ENCODE measurements at regions of chr2 and their contacts with region 1.

Region 1: DNA sequence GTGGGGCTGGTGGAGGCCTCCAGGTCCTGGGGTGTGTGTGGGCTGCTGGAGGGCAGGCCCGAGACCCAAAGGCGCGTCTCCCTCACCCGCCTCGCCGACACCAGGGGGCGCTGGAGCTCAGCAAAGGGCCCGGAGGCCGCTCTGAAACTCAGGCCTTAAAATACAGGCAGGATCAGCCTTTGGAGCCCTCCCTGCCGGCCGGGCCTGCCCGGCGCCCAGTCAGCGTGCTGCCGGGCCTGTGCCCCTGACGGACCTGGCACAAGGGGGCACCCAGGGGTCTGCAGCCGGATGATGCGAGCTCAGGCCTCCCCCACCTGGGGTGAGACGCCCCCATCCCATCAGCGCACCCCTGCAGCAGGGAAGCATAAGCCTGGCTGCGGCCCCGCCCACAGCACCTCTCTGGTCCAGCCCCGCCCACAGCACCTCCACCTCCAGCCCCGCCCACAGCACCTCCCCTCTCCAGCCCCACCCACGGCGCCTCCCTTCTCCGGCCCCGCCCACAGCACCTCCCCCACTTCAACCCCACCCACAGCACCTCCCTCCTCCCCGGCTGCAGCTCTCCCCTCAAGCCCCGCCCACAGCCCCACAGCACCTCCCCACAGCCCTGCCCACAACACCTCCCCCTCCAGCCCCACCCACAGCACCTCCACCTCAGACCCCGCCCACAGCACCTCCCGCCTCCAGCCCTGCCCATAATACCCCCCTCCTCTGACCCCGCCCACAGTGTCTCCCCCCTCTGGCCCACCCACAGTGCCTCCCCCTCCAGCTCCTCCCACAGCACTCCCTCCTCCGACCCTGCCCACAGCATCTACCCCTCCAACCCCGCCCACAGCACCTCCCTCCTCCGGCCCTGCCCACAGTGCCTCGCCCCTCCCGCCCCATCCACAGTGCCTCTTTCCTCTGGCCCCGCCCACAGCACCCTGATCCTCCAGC is 92.8 kb upstream of the OTOS start:
- DNase-seq: peak; percentile 86 to 88
- ATAC-seq: peak; percentile 72 to 85 (median 77)
- H3K4me3 ChIP-seq: peak overlapping the region in 6 of 10 donors; percentile 24 to 41 (median 34)
- H3K27ac ChIP-seq: peak overlapping the region in 8 of 10 donors; percentile 36 to 81 (median 58)
- H3K4me1 ChIP-seq: peaks cover 0 to 48% (median 21%) of the 10 kb centered on the region in 9 donors
- H3K27me3 ChIP-seq: peaks cover 0 to 7% (median 0%) of the 10 kb centered on the region in 7 donors
- CTCF ChIP-seq: peak; percentile 79 to 94 (median 87)

Region 2: GRCh38 chr2:240259201-240259923 is 26.1 kb after region 1 on chr2:
- intact Hi-C with region 1: loop called in 3 of 10 experiments (anchors 1 to 2 kb)
- DNase-seq: peak; percentile 78 to 83
- ATAC-seq: peak; percentile 87 to 96 (median 92)
- H3K4me3 ChIP-seq: no peak overlapping the region
- H3K27ac ChIP-seq: peak overlapping the region; percentile 86 to 98 (median 93)
- H3K4me1 ChIP-seq: peaks cover 6 to 38% (median 21%) of the 10 kb centered on the region in 9 donors
- H3K27me3 ChIP-seq: no peaks in the 10 kb centered on the region
- CTCF ChIP-seq: peak in 4 of 9 donors; percentile 8 to 44 (median 37)

Region 3: GRCh38 chr2:240277073-240277806 is 44.0 kb after region 1 on chr2:
- intact Hi-C with region 1: no loop called
- DNase-seq: peak in 1 of 2 donors; percentile 5
- ATAC-seq: peak in 3 of 8 donors; percentile 48 to 65 (median 64)
- H3K4me3 ChIP-seq: no peak overlapping the region
- H3K27ac ChIP-seq: no peak overlapping the region
- H3K4me1 ChIP-seq: peaks cover 0 to 21% (median 6%) of the 10 kb centered on the region in 9 donors
- H3K27me3 ChIP-seq: peaks cover 0 to 3% (median 0%) of the 10 kb centered on the region in 7 donors
- CTCF ChIP-seq: no peak

Region 4: DNA sequence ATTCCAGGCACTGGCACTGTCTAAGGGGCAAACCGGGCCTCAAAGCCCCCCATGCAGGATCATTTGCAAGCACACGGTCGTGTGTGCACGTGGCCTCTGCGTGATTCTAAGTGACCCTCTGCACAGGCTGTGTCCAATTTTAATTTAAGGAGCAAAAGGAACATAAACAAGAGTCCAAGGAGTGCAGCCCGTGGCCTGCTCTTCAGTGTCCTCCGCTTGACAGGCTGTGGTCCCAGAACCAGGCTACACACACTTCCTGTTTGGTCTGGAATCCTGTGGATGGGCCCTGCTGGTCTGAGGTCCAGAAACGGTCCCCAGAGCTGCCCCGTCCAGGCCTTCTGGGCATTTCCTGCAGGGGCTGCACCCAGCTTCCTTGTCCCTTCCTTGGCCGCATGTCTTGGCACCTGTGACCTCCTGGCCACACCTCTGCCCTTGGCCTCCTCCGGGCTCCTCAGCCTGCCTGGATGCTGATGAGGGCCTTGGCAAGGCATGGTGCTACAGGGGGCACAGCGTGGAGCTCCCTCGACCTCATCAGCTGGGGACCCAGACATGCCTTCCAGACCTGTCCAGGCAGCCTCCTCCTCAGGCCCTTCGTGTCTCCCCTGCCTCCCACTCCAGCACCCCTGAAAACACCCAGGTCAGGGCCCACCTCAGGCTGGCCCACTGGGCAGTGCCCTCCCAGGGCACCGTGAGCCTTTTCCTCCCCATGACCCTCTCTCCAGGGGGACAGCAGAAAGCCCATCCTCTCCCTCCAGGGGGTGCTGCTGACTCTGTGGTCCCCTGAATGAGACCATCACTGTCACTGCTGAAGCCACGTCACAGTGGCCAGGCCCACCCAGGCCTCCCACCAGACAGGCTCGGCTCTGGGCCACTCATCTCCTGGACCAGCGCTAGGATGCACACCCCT is 65.8 kb after region 1 on chr2:
- intact Hi-C with region 1: loop called in 7 of 10 experiments (anchors 1 to 5 kb)
- DNase-seq: no peak
- ATAC-seq: peak in 1 of 8 donors; percentile 2
- H3K4me3 ChIP-seq: no peak overlapping the region
- H3K27ac ChIP-seq: no peak overlapping the region
- H3K4me1 ChIP-seq: peaks cover 0 to 36% (median 9%) of the 10 kb centered on the region in 9 donors
- H3K27me3 ChIP-seq: no peaks in the 10 kb centered on the region
- CTCF ChIP-seq: no peak

Region 5: DNA sequence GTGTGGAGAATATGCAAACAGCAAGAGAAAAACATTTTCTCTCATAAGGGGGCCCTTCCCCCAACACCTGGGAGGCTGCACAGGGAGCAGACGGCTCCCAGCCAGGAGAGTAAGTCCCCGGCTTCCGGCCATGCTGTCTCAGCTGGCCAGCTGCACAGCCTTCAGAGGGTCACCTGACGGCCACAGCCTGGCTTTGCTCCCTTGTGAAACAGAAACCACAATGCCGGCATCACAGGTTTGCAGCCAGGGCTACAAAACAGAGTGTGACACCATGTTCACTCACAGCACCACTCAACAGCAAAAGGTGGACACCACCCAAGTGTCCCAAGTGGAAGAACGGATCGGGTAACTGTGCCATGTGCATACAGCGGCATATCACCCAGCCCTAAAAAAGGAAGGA is 115.3 kb after region 1 on chr2:
- intact Hi-C with region 1: loop called in 4 of 10 experiments (anchors 5 to 10 kb)
- DNase-seq: no peak
- ATAC-seq: no peak
- H3K4me3 ChIP-seq: no peak overlapping the region
- H3K27ac ChIP-seq: no peak overlapping the region
- H3K4me1 ChIP-seq: peaks cover 0 to 31% (median 0%) of the 10 kb centered on the region in 9 donors
- H3K27me3 ChIP-seq: peaks cover 0 to 7% (median 0%) of the 10 kb centered on the region in 7 donors
- CTCF ChIP-seq: no peak

Region 6: GRCh38 chr2:240369801-240370585 is 136.8 kb after region 1 on chr2:
- intact Hi-C with region 1: loop called in 3 of 10 experiments (anchors 5 kb)
- DNase-seq: peak; percentile 72 to 83
- ATAC-seq: peak; percentile 79 to 89 (median 84)
- H3K4me3 ChIP-seq: no peak overlapping the region
- H3K27ac ChIP-seq: peak overlapping the region; percentile 71 to 97 (median 92)
- H3K4me1 ChIP-seq: peaks cover 19 to 78% (median 41%) of the 10 kb centered on the region in 9 donors
- H3K27me3 ChIP-seq: no peaks in the 10 kb centered on the region
- CTCF ChIP-seq: no peak

Region 7: GRCh38 chr2:240387669-240388358 is 154.6 kb after region 1 on chr2:
- intact Hi-C with region 1: no loop called
- DNase-seq: peak; percentile 60 to 77
- ATAC-seq: peak; percentile 25 to 77 (median 64)
- H3K4me3 ChIP-seq: no peak overlapping the region
- H3K27ac ChIP-seq: peak overlapping the region in 2 of 10 donors; percentile 28 to 53
- H3K4me1 ChIP-seq: peaks cover 0 to 13% (median 9%) of the 10 kb centered on the region in 9 donors
- H3K27me3 ChIP-seq: no peaks in the 10 kb centered on the region
- CTCF ChIP-seq: no peak